A673 (cell line): ENCODE measurements at regions of chr4 and their contacts with region 1.

Region 1: DNA sequence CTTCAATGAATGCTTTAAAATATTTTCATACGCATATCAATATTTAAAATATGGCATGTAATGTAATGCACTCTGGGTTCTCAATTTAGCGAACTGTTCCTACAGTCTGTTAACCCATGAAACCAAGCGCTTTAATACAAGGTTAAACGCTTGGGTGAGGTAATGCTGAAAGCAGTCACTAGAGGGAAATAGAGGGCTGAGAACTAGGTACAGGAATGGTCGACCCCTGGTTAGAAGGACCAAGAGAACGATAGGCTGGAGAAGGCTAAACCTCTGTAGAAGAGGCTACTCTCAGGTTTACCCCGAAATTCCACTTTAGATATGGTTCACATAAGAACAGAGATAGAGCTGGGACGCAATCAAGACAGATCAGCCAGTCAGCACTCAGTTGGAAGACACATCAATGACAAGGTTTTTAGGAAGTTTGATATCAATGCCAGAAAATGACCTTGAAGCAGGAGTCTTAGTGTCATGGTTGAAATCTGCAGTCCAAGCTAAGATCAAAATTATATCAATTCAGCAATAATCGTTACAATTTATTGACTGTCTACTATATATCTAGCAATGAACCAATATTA is 26.9 kb downstream of the ARSJ start:
- DNase-seq: peak; percentile 82
- H3K4me3 ChIP-seq: no peak overlapping the region
- H3K27ac ChIP-seq: no peak overlapping the region
- H3K4me1 ChIP-seq: peaks cover 59% of the 10 kb centered on the region
- H3K27me3 ChIP-seq: no peaks in the 10 kb centered on the region
- CTCF ChIP-seq: peak; percentile 93

Region 2: DNA sequence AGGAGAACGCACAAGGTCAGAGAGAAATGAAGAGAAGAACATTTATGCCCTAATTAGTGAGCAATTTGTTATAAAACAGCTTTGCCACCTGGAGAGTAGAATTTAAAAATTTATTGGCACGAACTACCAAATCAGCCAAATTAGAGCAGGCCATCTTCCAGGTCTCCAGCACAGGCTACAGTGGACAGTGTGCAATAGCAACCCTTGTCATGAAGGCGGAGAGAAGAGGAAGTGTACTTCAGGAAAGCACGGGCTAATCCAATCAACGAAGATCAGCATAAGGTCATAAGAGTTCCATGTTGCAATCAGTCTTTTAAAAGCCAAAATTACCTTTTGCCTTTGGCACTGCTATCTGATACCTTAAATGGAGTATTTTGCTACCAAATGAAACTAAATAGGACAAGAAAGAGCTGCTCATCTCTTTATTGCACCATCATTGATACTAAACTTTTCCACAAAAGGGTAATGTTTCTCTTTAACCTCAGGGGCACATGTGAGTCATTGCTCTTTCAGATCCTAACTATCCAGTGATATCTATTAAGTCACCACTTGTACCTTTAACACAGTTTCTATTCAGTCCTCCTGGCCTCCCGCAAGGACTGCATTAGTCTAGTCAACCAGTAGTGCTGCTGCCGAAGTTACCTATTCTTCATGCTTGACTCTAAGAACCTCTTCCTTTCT is 883.2 kb before region 1 on chr4:
- CTCF ChIA-PET with region 1: no interaction called
- POLR2A ChIA-PET with region 1: no interaction called
- intact Hi-C with region 1: no loop called
- DNase-seq: no peak
- H3K4me3 ChIP-seq: no peak overlapping the region
- H3K27ac ChIP-seq: no peak overlapping the region
- H3K4me1 ChIP-seq: no peaks in the 10 kb centered on the region
- H3K27me3 ChIP-seq: no peaks in the 10 kb centered on the region
- CTCF ChIP-seq: no peak

Region 3: GRCh38 chr4:113893546-113893945 is 59.0 kb before region 1 on chr4:
- CTCF ChIA-PET with region 1: interaction called, 15 read pairs
- POLR2A ChIA-PET with region 1: no interaction called
- intact Hi-C with region 1: no loop called
- DNase-seq: no peak
- H3K4me3 ChIP-seq: no peak overlapping the region
- H3K27ac ChIP-seq: no peak overlapping the region
- H3K4me1 ChIP-seq: no peaks in the 10 kb centered on the region
- H3K27me3 ChIP-seq: no peaks in the 10 kb centered on the region
- CTCF ChIP-seq: peak; percentile 30; the same call in 1 of the 2 replicates

Region 4: DNA sequence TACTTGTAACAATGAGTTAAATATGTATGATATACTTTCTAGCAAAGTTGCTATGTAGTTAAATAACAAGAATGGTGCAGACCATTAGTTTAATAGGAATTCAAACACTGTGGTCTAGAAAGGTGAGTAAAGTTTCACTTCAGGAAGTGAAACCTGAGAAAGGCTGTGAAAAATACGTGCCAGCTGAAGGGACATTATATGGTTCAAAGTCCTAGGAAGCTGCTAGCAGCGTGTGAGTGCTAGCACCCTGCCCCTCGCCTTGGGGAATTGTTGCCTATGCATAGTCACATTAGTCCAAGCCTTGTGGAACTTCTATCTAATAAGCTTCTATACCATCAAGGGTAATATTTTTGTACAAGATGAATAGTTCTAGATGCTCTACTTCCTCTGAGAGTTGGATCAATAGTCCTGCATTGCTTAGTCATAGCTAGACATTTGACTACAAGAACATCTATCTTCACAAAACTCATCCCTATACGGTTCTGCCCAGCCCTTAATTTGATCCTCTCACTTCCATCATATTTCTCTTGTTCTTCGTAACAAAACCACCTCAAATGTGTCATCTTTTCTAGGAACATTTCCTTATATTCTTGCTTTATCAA is 72.7 kb after region 1 on chr4:
- CTCF ChIA-PET with region 1: no interaction called
- POLR2A ChIA-PET with region 1: no interaction called
- intact Hi-C with region 1: loop called (anchors 1 kb)
- DNase-seq: no peak
- H3K4me3 ChIP-seq: no peak overlapping the region
- H3K27ac ChIP-seq: no peak overlapping the region
- H3K4me1 ChIP-seq: peaks cover 21% of the 10 kb centered on the region
- H3K27me3 ChIP-seq: no peaks in the 10 kb centered on the region
- CTCF ChIP-seq: no peak

Region 5: DNA sequence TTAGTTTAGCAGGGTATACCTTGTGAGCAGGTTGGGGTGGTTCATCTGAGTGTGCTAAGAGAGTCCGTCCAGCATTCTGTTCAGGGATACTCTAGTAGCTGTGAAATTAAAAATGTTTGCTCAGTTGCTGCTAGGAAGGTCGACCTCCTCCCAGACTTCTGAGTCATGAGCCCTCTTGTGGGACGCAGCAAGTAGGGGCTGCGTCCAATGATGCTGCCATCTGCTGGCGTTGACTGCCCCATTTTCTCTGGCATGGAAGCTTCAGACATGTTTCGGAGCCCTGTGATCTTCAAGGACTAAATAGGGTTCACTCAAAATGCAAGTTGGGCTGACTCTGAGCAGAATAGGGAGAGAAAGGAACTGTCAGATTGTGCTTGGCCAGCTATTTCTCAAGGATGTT is 227.9 kb after region 1 on chr4:
- CTCF ChIA-PET with region 1: interaction called, 4 read pairs
- POLR2A ChIA-PET with region 1: no interaction called
- intact Hi-C with region 1: loop called (anchors 1 kb)
- DNase-seq: peak; percentile 82
- H3K4me3 ChIP-seq: no peak overlapping the region
- H3K27ac ChIP-seq: no peak overlapping the region
- H3K4me1 ChIP-seq: no peaks in the 10 kb centered on the region
- H3K27me3 ChIP-seq: no peaks in the 10 kb centered on the region
- CTCF ChIP-seq: peak; percentile 83

Region 6: GRCh38 chr4:114694770-114695169 is 742.2 kb after region 1 on chr4:
- CTCF ChIA-PET with region 1: no interaction called
- POLR2A ChIA-PET with region 1: no interaction called
- intact Hi-C with region 1: loop called (anchors 10 kb)
- DNase-seq: peak; percentile 51
- H3K4me3 ChIP-seq: no peak overlapping the region
- H3K27ac ChIP-seq: no peak overlapping the region
- H3K4me1 ChIP-seq: peaks cover 6% of the 10 kb centered on the region
- H3K27me3 ChIP-seq: no peaks in the 10 kb centered on the region
- CTCF ChIP-seq: peak; percentile 66